GM13977 (cell line): ENCODE measurements at regions of chr6 and their contacts with region 1.

Region 1: GRCh38 chr6:17808609-17809008 is 101.9 kb upstream of the NUP153 start:
- DNase-seq: no peak
- CTCF ChIP-seq: no peak

Region 2: DNA sequence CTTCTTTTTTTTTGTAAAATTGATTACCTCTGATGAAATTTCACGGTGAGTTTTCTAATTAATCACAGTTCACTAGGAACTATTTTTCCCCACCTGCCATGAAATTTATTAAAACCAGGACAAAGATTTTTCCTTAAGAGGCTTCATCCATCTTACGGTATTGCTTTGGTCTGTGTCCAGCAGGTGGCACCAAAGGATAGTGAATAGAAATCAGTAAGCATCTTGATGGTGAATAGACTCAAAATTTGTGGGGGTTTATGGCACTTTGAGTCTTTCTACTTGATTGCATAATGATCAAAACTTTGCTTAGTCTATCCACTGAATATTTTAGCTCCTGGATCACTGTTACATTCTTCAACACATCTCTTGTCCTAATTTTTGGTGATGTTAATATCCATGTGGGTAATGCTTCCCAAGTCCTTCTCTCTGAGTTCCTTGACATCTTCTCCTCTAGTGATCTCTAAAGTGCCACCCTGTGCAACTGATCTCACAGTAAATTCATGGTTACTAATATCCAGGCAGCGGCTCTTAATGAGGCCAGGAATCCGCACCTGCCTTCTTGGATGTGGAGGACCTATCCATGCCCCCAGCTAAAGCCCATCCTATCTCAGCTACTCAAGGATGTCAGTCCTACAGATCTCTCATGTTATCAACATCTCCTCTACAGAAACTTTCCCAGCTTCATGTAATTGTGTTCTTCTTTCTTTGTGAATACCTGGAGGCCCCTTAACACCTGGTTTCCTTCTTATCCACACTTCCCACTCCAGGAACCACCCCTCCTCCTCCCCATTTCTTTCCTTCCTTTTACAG is 652.3 kb before region 1 on chr6:
- in situ Hi-C with region 1: loop called (anchors 10 kb)
- DNase-seq: peak; percentile 56
- CTCF ChIP-seq: peak; percentile 74